Activated CD4-positive, alpha-beta memory T cell treated with anti-CD3 and anti-CD28 coated beads, Interleukin-2, amount 10 ng/mL, durations not matched to agents 7 days and 5 days (primary cell): ENCODE measurements at regions of chr10 and their contacts with region 1.

Region 1: DNA sequence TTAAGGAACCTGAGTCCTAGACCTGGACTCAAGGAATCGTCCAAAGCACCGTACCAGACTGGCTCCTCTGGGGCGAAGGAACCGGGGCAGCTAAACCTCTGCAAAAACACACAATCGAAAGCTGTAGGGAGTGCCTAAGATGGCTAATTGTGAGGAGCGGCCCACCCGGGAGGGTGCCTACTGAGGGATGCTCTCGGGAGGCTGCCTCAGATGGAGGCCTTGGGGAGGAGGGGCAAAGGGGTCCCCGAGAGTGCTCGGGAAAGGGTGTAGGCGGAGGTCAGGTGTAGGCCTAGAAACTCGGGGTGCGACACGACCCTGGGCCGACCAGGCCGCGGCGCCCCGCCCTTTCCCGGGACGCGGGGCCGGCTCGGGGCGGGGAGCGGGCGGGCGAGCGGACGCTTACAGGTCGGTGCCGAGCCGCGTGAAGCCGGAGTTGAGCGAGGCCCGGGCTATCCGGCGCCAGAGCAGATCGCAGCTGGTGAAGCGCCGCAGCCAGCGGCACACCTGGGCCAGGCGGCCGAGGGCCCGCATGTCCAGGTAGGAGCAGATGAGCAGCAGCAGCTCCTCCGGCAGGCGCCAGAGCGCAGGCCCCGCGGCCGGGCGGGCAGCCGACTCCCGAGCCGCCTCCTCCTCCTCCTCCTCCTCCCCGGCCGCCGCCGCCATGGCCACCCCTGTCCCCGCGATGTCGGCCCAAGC is 844 bp downstream of the FBXW4 start:
- DNase-seq: peak; percentile 74
- H3K4me3 Mint-ChIP-seq: peak overlapping the region; percentile 97
- H3K27ac Mint-ChIP-seq: peak overlapping the region; percentile 97
- H3K4me1 Mint-ChIP-seq: peaks cover 35% of the 10 kb centered on the region
- H3K27me3 Mint-ChIP-seq: no peaks in the 10 kb centered on the region

Region 2: DNA sequence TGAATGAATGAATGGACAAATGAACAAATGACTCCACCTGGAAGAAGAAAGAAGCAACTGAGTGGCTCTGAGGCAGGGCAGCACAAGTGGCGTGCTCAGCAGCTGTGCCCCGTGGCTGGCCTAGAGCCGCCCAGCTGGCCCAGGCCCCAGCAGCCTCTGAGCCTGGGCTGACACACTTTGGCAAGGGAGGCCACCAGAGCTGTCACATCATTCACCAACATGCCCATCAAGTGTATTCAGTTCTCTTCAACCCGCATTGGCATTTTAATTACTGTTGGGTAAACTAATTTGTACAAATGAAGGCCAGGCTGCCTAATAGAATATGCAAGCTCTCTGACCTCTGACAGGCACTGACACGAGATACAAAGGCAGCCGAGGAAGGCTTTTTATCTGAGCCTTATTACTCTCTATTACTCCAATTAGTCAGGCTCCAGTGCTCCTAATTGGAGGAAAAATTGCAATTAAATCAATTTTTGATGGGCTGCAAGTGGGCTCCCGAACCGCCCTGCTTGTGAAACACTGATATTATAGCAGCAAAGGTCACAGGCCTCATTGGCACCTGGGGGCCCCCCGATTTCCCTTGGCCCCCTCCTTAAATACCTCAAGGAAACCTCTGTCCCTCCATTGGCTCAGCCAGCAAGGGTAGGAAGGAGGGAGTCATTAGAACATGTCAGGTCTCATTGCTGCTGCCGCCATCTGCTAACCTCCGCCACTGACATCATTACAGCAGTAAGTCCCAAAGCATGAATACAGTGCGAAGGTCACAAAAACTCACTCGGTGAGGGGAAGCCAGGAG is 64.1 kb before region 1 on chr10:
- CTCF ChIA-PET with region 1: no interaction called
- POLR2A ChIA-PET with region 1: no interaction called
- DNase-seq: no peak
- H3K4me3 Mint-ChIP-seq: no peak overlapping the region
- H3K27ac Mint-ChIP-seq: no peak overlapping the region
- H3K4me1 Mint-ChIP-seq: no peaks in the 10 kb centered on the region
- H3K27me3 Mint-ChIP-seq: no peaks in the 10 kb centered on the region

Region 3: DNA sequence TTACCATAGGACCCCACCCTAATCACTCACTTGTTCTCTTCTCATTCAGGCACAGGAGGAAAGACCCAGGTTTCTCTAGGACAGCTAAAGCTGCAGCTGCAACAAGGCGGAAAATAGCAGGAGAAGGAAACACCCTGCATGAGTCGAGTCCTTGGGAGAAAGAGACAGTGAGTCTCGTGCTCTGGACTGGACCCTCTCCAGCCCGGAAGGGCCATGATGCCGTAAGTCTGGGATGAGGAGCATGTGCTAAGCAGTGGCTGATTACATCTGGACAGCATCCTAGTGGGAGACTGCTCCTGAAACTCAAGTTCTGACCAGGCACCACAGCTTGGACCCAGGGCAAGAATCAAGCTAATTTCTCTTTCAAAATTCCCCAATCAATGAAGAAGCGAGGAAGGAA is 38.6 kb before region 1 on chr10:
- CTCF ChIA-PET with region 1: no interaction called
- POLR2A ChIA-PET with region 1: no interaction called
- DNase-seq: no peak
- H3K4me3 Mint-ChIP-seq: no peak overlapping the region
- H3K27ac Mint-ChIP-seq: no peak overlapping the region
- H3K4me1 Mint-ChIP-seq: no peaks in the 10 kb centered on the region
- H3K27me3 Mint-ChIP-seq: no peaks in the 10 kb centered on the region

Region 4: GRCh38 chr10:101682172-101682825 is 11.8 kb before region 1 on chr10:
- CTCF ChIA-PET with region 1: no interaction called
- POLR2A ChIA-PET with region 1: interaction called, 16 read pairs
- DNase-seq: no peak
- H3K4me3 Mint-ChIP-seq: no peak overlapping the region
- H3K27ac Mint-ChIP-seq: no peak overlapping the region
- H3K4me1 Mint-ChIP-seq: peaks cover 10% of the 10 kb centered on the region
- H3K27me3 Mint-ChIP-seq: no peaks in the 10 kb centered on the region

Region 5: DNA sequence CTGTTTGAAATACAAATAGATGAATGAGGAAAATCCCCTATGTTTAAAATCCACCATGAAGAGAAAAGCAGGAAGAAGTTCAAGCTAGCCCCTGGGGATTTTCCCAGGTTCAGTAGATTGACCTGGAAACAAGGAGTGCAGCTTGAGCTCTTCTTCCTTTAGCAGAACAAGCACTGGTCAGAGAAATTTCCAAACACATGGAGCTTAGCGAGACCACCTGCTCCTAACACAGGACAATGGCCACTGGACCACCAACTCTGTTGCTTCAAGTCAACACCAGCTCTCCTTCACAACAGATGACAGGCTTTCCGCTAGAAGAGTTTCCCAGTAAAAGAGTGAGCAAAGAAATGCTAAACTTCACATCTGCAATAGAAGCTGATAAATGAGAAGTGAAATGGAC is 10.2 kb after region 1 on chr10:
- CTCF ChIA-PET with region 1: no interaction called
- POLR2A ChIA-PET with region 1: interaction called, 22 read pairs
- DNase-seq: no peak
- H3K4me3 Mint-ChIP-seq: no peak overlapping the region
- H3K27ac Mint-ChIP-seq: no peak overlapping the region
- H3K4me1 Mint-ChIP-seq: peaks cover 36% of the 10 kb centered on the region
- H3K27me3 Mint-ChIP-seq: peaks cover 22% of the 10 kb centered on the region

Region 6: DNA sequence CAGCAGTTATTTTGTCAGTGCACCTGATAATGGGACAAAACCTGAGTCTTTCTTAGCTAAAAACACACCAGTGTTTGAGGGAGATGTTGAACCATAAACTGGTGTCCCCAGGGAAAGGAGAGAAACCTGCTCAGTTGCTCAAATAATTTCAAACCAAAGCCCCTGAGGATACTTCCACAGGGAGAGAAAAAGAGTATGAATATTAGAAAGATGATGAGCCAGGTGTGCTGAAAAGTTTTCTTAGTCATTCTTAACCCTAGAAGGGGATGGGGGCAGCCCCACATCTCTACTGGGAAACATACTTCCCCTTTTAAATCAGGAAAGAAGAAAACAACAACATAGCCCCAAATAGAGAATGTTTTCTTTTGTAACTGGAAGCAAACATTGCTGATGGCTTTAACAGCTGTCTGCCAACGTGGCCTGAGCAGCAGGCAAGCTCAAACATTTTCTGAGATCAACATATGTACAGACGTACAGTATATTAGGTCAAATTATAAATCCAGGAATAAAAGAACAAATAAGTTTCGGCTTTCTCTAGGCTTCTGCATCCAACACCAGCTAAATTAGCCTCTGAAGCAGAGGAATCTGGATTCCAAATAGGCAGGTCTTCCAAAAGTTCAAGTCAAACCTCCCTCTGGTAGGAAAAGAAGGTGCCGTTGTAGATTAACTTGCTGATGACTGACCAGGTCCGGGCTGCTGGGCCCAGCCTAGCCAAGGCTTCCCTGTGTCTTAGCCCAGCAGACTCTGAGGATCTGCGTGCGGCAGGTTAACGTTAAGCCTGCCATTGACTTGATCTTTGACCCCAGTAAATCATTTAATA is 31.4 kb after region 1 on chr10:
- CTCF ChIA-PET with region 1: no interaction called
- POLR2A ChIA-PET with region 1: no interaction called
- DNase-seq: no peak
- H3K4me3 Mint-ChIP-seq: no peak overlapping the region
- H3K27ac Mint-ChIP-seq: no peak overlapping the region
- H3K4me1 Mint-ChIP-seq: peaks cover 15% of the 10 kb centered on the region
- H3K27me3 Mint-ChIP-seq: peaks cover 8% of the 10 kb centered on the region

Region 7: GRCh38 chr10:101938316-101939281 is 244.5 kb after region 1 on chr10:
- CTCF ChIA-PET with region 1: no interaction called
- POLR2A ChIA-PET with region 1: no interaction called
- DNase-seq: no peak
- H3K4me3 Mint-ChIP-seq: no peak overlapping the region
- H3K27ac Mint-ChIP-seq: no peak overlapping the region
- H3K4me1 Mint-ChIP-seq: no peaks in the 10 kb centered on the region
- H3K27me3 Mint-ChIP-seq: no peaks in the 10 kb centered on the region